Activated CD4-positive, alpha-beta T cell treated with anti-CD3 and anti-CD28 coated beads, Interleukin-2, amount 10 ng/mL, durations not matched to agents 24 days and 14 days (primary cell): ENCODE measurements at regions of chr18 and their contacts with region 1.

Region 1: GRCh38 chr18:658001-658946 is 821 bp downstream of the TYMS start:
- DNase-seq: peak; percentile 94
- H3K4me3 Mint-ChIP-seq: peak overlapping the region; percentile 96
- H3K27ac Mint-ChIP-seq: peak overlapping the region; percentile 96
- H3K4me1 Mint-ChIP-seq: peaks cover 42% of the 10 kb centered on the region
- H3K27me3 Mint-ChIP-seq: no peaks in the 10 kb centered on the region

Region 2: DNA sequence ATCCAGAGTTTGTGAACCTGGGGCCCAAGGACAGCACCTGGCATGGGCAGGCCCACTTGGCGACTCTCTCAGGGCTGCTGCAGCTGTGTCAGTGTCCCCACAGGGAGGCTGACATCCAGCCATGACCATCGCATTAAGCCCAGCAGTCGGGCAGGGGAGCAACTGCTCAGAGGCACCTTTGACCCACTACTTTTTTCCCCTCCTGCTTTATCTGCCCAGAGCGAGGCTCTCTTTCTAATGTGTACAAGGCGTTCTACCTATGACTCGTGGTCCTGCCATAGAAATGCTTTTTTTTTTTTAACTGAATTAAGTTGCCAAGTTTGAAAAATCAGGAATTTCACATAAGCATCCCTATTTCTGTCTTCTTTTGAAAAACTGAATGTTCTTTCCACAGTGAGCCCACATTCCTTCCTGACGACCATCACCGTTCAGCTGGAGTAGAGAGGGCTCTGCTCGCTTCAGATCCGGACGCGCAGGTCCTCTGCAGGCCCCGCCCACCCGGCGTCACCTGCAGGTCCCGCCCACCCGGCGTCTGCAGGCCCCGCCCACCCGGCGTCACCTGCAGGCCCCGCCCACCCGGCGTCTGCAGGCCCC is 61.9 kb before region 1 on chr18:
- intact Hi-C with region 1: loop called (anchors 2 kb)
- DNase-seq: peak; percentile 57
- H3K4me3 Mint-ChIP-seq: no peak overlapping the region
- H3K27ac Mint-ChIP-seq: no peak overlapping the region
- H3K4me1 Mint-ChIP-seq: peaks cover 8% of the 10 kb centered on the region
- H3K27me3 Mint-ChIP-seq: peaks cover 34% of the 10 kb centered on the region

Region 3: DNA sequence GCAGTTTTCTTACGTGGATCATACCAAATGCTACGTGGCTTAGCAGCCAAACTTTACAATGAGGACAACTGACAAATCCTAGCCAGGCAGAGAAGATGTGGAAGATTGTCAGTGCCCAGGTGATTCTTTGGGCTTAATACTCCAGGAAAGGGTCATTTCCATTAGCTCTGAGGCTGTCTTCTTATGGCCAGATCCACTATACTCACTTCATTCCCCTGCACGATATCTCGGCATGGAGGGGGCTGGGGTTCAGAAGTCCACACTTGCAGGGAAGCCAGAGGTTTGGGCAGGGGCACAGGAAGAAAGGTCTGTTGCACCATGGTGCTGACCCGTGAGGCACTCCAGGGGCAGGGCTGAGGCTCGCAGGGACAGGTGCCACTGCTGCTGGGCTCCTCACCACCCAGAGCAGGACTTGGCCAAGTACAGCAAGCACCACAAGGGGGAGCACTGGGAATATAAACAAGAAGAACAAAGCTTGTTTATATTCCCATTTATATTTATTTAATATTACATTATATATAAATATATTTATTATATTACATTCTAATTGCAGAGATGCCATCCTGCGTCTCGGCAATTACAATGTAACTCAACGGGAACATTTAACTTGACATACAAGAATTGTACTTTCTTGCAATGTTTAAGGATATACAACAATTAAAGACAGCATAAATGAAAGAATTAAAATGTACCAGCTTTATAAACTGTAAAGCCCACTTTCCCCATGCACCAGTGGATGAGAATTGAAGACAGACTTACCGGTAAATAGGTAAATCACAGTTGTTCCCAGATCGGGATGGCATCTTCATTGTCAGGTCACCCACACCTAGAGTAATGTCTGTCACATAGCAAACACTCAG is 34.3 kb before region 1 on chr18:
- intact Hi-C with region 1: loop called (anchors 5 kb)
- DNase-seq: peak; percentile 89
- H3K4me3 Mint-ChIP-seq: no peak overlapping the region
- H3K27ac Mint-ChIP-seq: no peak overlapping the region
- H3K4me1 Mint-ChIP-seq: peaks cover 2% of the 10 kb centered on the region
- H3K27me3 Mint-ChIP-seq: peaks cover 41% of the 10 kb centered on the region

Region 4: DNA sequence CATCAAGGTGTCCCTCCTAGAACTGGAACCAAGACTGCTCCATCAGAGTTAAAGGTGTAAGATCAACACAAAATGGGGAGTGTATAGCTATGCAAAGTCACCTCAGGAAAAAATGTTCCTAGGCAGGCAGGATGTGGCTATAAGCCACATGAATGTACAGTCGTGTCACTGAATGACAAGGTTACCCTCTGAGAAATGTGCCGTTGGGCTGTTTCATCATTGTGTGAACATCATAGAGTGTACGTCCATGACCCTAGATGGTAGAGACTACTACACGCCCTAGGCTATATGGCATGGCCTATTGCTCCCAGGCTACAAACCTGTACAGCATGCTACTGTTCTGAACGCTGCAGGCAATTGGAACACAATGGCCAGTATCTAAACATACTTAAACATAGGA is 23.7 kb after region 1 on chr18:
- intact Hi-C with region 1: loop called (anchors 2 kb)
- DNase-seq: peak; percentile 92
- H3K4me3 Mint-ChIP-seq: peak overlapping the region; percentile 55
- H3K27ac Mint-ChIP-seq: peak overlapping the region; percentile 88
- H3K4me1 Mint-ChIP-seq: peaks cover 23% of the 10 kb centered on the region
- H3K27me3 Mint-ChIP-seq: no peaks in the 10 kb centered on the region

Region 5: DNA sequence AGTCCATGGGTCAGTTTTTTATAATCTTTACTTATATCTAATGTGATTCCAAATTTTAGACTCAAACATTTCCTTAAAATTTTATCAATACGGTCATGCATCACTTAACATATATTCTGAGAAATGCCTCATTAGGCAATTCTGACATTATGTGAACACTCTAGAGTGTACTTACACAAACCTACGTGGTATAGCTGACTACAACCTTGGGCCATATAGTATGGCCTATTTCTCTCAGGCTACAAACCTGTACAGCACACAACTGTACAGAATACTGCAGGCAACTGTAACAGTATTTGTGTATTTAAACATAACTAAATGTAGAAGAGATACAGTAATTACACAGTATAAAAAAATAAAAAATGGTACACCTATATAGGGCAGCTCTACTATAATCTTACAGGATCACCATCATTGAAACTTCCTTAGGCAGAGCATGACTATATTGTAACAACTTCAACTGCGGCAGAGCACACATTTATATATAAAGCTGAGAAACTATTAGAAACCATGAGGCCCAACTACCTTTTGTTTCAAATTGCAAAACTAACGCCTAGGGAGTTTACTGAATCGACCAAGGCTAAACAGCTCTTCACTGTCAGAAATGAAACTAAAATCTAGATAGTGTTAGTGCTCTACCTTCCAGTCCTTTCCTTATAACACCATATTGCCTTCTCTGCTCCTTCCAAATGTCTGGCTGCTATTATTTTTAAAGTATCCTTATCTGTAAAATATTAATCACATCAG is 146.9 kb after region 1 on chr18:
- intact Hi-C with region 1: loop called (anchors 2 kb)
- DNase-seq: peak; percentile 55
- H3K4me3 Mint-ChIP-seq: peak overlapping the region; percentile 76
- H3K27ac Mint-ChIP-seq: peak overlapping the region; percentile 43
- H3K4me1 Mint-ChIP-seq: peaks cover 50% of the 10 kb centered on the region
- H3K27me3 Mint-ChIP-seq: no peaks in the 10 kb centered on the region

Region 6: GRCh38 chr18:812376-813171 is 154.3 kb after region 1 on chr18:
- intact Hi-C with region 1: loop called (anchors 2 kb)
- DNase-seq: peak; percentile 95
- H3K4me3 Mint-ChIP-seq: peak overlapping the region; percentile 97
- H3K27ac Mint-ChIP-seq: peak overlapping the region; percentile 100
- H3K4me1 Mint-ChIP-seq: peaks cover 65% of the 10 kb centered on the region
- H3K27me3 Mint-ChIP-seq: peaks cover 3% of the 10 kb centered on the region